ENCODE measurements at regions of chr1 and their contacts with region 1.

Region 1: GRCh38 chr1:2545759-2546514 is 10.2 kb upstream of the TNFRSF14 start:
- DNase-seq: peak; percentile 94
- ATAC-seq: peak; percentile 34
- H3K4me3 Mint-ChIP-seq: peak overlapping the region; percentile 78
- H3K27ac Mint-ChIP-seq: no peak overlapping the region
- H3K4me1 Mint-ChIP-seq: peaks cover 16% of the 10 kb centered on the region
- H3K27me3 Mint-ChIP-seq: no peaks in the 10 kb centered on the region

Region 2: GRCh38 chr1:2194898-2195673 is 350.9 kb before region 1 on chr1:
- CTCF ChIA-PET with region 1: no interaction called
- POLR2A ChIA-PET with region 1: no interaction called
- intact Hi-C with region 1: loop called in 1 of 2 experiments (anchors 1 kb)
- DNase-seq: peak; percentile 93
- ATAC-seq: peak; percentile 67
- H3K4me3 Mint-ChIP-seq: peak overlapping the region; percentile 77
- H3K27ac Mint-ChIP-seq: peak overlapping the region; percentile 86
- H3K4me1 Mint-ChIP-seq: peaks cover 32% of the 10 kb centered on the region
- H3K27me3 Mint-ChIP-seq: no peaks in the 10 kb centered on the region

Region 3: DNA sequence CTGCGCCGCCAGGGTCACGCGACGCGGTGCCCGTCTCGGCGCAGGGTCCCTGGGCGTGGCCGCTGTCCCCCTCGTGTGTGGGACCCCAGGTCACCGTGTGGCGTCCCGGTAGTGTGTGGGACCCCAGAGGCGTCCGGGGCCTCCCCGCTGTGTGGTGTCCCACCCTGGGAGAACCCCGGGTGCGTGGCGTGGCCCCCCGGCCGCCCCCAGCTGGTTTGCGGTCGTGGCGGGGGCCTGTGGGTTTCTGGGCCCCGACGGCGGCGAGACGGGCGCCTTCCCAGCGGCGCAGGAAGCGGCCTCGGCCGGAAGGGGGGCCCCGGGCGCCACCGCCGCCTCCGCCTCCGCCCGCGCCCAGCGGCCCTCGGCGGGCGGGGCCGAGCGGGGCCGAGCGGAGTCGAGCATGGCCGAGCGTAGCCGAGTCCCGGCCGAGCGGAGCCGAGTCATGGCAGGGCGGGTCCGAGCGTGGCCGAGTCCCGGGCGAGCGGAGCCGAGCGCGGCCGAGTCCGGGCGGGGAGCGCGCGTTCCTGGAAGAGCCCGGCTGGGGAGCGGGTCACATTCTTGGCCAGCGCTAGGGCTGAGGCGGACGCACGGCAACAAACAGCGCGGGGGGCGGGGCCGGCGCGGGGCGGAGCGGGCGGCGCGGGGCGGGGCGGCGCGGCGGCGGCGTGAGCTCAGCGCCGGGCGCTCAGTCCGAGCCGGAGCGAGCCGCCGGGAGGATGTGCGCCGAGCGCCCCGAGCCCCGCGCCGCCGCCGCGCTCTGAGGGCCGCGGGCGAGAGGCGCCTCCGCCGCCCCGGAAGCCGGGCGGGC is 318.4 kb before region 1 on chr1:
- CTCF ChIA-PET with region 1: no interaction called
- POLR2A ChIA-PET with region 1: interaction called, 3 read pairs
- intact Hi-C with region 1: loop called in 1 of 2 experiments (anchors 1 kb)
- DNase-seq: peak; percentile 98
- ATAC-seq: peak; percentile 94
- H3K4me3 Mint-ChIP-seq: peak overlapping the region; percentile 32
- H3K27ac Mint-ChIP-seq: no peak overlapping the region
- H3K4me1 Mint-ChIP-seq: peaks cover 6% of the 10 kb centered on the region
- H3K27me3 Mint-ChIP-seq: no peaks in the 10 kb centered on the region

Region 4: GRCh38 chr1:2300851-2301606 is 244.9 kb before region 1 on chr1:
- CTCF ChIA-PET with region 1: no interaction called
- POLR2A ChIA-PET with region 1: no interaction called
- intact Hi-C with region 1: loop called in 1 of 2 experiments (anchors 5 kb)
- DNase-seq: peak; percentile 95
- ATAC-seq: peak; percentile 81
- H3K4me3 Mint-ChIP-seq: peak overlapping the region; percentile 79
- H3K27ac Mint-ChIP-seq: peak overlapping the region; percentile 95
- H3K4me1 Mint-ChIP-seq: peaks cover 59% of the 10 kb centered on the region
- H3K27me3 Mint-ChIP-seq: no peaks in the 10 kb centered on the region

Region 5: GRCh38 chr1:2514863-2515762 is 30.8 kb before region 1 on chr1:
- CTCF ChIA-PET with region 1: no interaction called
- POLR2A ChIA-PET with region 1: no interaction called
- intact Hi-C with region 1: no loop called
- DNase-seq: no peak
- ATAC-seq: no peak
- H3K4me3 Mint-ChIP-seq: no peak overlapping the region
- H3K27ac Mint-ChIP-seq: no peak overlapping the region
- H3K4me1 Mint-ChIP-seq: no peaks in the 10 kb centered on the region
- H3K27me3 Mint-ChIP-seq: no peaks in the 10 kb centered on the region

Region 6: GRCh38 chr1:2525920-2526823 is 19.8 kb before region 1 on chr1 and contains the start of gene PANK4:
- CTCF ChIA-PET with region 1: interaction called, 8 read pairs
- POLR2A ChIA-PET with region 1: interaction called, 5 read pairs
- intact Hi-C with region 1: loop called (anchors 1 kb)
- DNase-seq: peak; percentile 96
- ATAC-seq: peak; percentile 87
- H3K4me3 Mint-ChIP-seq: peak within 1 kb of the TSS; percentile 77
- H3K27ac Mint-ChIP-seq: peak within 1 kb of the TSS; percentile 91
- H3K4me1 Mint-ChIP-seq: peaks cover 43% of the 10 kb centered on the region
- H3K27me3 Mint-ChIP-seq: peaks cover 3% of the 10 kb centered on the region
- total RNA-seq, gene PANK4: 32.4 to 39.2 TPM

Region 7: GRCh38 chr1:2575801-2576663 is 30.1 kb after region 1 on chr1:
- CTCF ChIA-PET with region 1: interaction called, 4 read pairs
- POLR2A ChIA-PET with region 1: interaction called, 3 read pairs
- intact Hi-C with region 1: loop called in 1 of 2 experiments (anchors 1 kb)
- DNase-seq: no peak
- ATAC-seq: no peak
- H3K4me3 Mint-ChIP-seq: peak overlapping the region; percentile 62
- H3K27ac Mint-ChIP-seq: peak overlapping the region; percentile 98
- H3K4me1 Mint-ChIP-seq: peaks cover 43% of the 10 kb centered on the region
- H3K27me3 Mint-ChIP-seq: no peaks in the 10 kb centered on the region

Region 8: GRCh38 chr1:2840036-2840809 is 294.3 kb after region 1 on chr1:
- CTCF ChIA-PET with region 1: no interaction called
- POLR2A ChIA-PET with region 1: no interaction called
- intact Hi-C with region 1: loop called in 1 of 2 experiments (anchors 1 kb)
- DNase-seq: peak; percentile 81
- ATAC-seq: peak; percentile 96
- H3K4me3 Mint-ChIP-seq: peak overlapping the region; percentile 67
- H3K27ac Mint-ChIP-seq: peak overlapping the region; percentile 84
- H3K4me1 Mint-ChIP-seq: peaks cover 21% of the 10 kb centered on the region
- H3K27me3 Mint-ChIP-seq: no peaks in the 10 kb centered on the region